ENCODE measurements at regions of chr6 and their contacts with region 1.

Region 1: GRCh38 chr6:47047479-47048407 is 5.6 kb upstream of the ADGRF1 start:
- DNase-seq: peak; percentile 18
- H3K4me3 ChIP-seq: no peak overlapping the region
- H3K27ac ChIP-seq: no peak overlapping the region
- H3K27me3 ChIP-seq: peaks cover 4% of the 10 kb centered on the region
- CTCF ChIP-seq: peak; percentile 78

Region 2: DNA sequence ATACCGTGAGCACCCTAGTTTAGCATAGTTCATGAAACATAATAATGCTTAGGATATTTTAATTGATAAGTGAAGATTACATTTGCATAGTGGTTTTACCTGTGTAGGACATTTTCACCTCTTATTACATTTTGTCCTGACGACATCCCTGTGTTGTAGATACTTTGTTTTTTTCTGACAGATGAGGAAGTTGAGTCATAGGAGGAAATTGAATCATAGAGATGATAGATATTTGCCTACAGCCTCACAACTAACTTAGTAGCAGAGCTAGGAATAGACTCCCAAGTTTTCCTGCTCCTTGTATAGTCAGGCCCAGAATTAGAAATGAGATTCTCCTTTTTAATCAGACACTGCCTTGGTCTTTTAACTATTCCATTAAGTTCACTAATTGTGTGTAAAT is 1569.5 kb before region 1 on chr6:
- CTCF ChIA-PET with region 1: no interaction called
- POLR2A ChIA-PET with region 1: no interaction called
- DNase-seq: no peak
- H3K4me3 ChIP-seq: no peak overlapping the region
- H3K27ac ChIP-seq: no peak overlapping the region
- H3K27me3 ChIP-seq: no peaks in the 10 kb centered on the region
- CTCF ChIP-seq: no peak

Region 3: DNA sequence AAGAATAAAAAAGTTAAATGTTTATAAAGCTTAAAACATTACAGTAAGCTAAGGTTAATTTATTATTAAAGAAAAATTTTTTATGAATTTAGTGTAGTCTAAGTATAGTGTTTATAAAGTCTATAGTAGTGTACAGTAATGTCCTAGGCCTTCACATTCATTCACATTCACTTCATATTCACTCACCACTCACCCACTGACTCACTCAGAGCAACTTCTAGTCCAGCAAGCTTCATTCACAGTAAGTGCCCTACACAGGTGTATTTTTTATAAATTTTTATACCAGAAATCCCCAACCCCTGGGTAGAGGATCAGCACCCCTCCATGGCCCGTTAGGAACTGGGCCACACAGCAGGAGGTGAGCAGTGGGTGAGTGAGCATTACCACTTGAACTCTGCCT is 18.7 kb after region 1 on chr6:
- CTCF ChIA-PET with region 1: interaction called, 10 read pairs
- POLR2A ChIA-PET with region 1: no interaction called
- DNase-seq: no peak
- H3K4me3 ChIP-seq: no peak overlapping the region
- H3K27ac ChIP-seq: no peak overlapping the region
- H3K27me3 ChIP-seq: no peaks in the 10 kb centered on the region
- CTCF ChIP-seq: no peak

Measured in AG04450 (cell line).